Activated T-helper 1 cell treated with anti-CD3 and anti-CD28 coated beads, Interleukin-12 subunit alpha, Interleukin-12 subunit beta, Interleukin-2, Interleukin-4 antibody, amounts not matched to agents 30 ng/mL and 10 ng/mL and 1 ng/mL, durations not matched to agents 14 hours and 24 hours and 36 hours (primary cell): ENCODE measurements at regions of chr7 and their contacts with region 1.

Region 1: GRCh38 chr7:5237286-5237685 is 45.5 kb upstream of the SLC29A4 start:
- DNase-seq: no peak
- H3K4me3 Mint-ChIP-seq: no peak overlapping the region
- H3K27ac Mint-ChIP-seq: no peak overlapping the region
- H3K4me1 Mint-ChIP-seq: peaks cover 14% of the 10 kb centered on the region
- H3K27me3 Mint-ChIP-seq: peaks cover 24% of the 10 kb centered on the region

Region 2: DNA sequence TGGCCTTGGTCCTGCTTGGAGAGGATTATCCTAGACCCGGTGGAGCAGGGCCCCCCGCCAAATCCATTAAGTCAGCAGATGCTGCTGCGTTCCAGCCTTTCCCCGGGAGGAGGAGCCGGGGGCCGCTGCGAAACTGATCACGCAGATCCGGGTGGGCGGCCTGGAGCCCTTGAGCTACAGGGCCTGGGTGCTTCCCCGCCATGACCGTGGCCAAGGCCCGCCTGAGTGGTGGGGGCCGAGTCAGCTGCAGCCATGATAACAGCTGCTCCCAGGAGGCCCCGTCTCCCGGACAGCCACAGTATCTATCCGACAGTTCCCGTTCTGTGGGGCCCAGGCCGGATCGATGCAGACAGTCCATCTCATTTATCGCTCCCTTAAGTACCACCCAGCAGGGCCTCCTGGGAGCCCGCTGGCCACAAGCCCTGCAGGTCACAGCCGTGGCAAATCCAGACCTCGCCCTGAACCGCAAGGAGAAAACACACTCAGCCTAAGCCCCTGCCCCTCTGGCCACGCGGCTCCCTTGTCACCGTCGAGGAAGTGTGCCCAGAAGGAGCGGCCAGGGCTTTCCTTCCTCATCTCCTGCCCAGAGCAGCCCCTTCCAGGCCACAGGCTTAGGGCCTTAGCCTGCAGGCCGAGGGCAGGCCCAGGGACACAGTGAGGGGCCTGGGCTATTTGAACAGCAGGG is 11.1 kb after region 1 on chr7:
- intact Hi-C with region 1: no loop called
- DNase-seq: no peak
- H3K4me3 Mint-ChIP-seq: no peak overlapping the region
- H3K27ac Mint-ChIP-seq: no peak overlapping the region
- H3K4me1 Mint-ChIP-seq: no peaks in the 10 kb centered on the region
- H3K27me3 Mint-ChIP-seq: peaks cover 1% of the 10 kb centered on the region

Region 3: DNA sequence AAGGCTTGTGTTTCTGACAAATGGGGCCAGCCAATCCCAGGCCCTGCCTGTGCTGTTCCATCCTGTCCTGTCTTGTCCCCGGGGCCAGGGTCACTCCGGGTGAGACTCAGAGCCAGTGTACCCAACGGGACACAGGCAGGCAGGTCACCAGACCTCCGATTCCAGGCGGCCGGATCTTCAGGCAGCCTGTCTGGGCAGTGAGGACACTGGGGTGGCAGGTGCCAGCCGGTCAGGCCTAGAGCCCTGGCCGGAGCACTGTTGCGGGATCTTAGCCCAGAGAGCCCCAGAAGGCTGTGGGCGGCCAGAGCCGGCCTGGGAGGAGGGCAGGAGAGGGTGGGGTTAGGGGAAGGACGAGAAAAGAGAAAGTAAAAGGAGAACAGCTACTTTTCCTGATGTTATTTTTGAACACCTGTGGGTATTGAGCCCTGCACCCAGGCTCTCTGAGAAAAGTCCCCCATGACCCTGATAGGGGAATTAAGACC is 320.7 kb after region 1 on chr7:
- intact Hi-C with region 1: loop called (anchors 2 kb)
- DNase-seq: no peak
- H3K4me3 Mint-ChIP-seq: peak overlapping the region; percentile 79
- H3K27ac Mint-ChIP-seq: peak overlapping the region; percentile 70
- H3K4me1 Mint-ChIP-seq: peaks cover 35% of the 10 kb centered on the region
- H3K27me3 Mint-ChIP-seq: peaks cover 9% of the 10 kb centered on the region

Region 4: DNA sequence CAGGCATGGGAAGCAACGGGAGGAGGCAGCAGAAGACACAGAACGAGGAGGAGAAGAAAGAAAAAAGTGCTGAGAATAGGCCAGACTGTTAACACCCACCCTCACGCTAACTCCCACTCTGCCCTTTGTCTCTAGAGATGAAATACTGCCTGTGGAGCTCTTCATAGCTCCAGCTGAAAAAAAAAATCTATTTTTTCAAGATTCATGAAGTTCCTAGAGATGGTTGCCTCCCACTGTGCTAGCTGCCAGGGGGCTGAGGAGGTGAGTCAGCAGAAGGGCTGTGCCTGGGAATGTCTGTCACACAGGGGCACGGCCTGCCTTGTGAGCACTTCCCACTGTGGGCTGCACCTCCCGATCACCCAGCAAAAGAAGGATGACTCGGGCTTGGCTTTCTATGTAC is 399.6 kb after region 1 on chr7:
- intact Hi-C with region 1: no loop called
- DNase-seq: no peak
- H3K4me3 Mint-ChIP-seq: no peak overlapping the region
- H3K27ac Mint-ChIP-seq: no peak overlapping the region
- H3K4me1 Mint-ChIP-seq: peaks cover 5% of the 10 kb centered on the region
- H3K27me3 Mint-ChIP-seq: peaks cover 2% of the 10 kb centered on the region